ENCODE measurements at regions of chr15 and their contacts with region 1.

Region 1: DNA sequence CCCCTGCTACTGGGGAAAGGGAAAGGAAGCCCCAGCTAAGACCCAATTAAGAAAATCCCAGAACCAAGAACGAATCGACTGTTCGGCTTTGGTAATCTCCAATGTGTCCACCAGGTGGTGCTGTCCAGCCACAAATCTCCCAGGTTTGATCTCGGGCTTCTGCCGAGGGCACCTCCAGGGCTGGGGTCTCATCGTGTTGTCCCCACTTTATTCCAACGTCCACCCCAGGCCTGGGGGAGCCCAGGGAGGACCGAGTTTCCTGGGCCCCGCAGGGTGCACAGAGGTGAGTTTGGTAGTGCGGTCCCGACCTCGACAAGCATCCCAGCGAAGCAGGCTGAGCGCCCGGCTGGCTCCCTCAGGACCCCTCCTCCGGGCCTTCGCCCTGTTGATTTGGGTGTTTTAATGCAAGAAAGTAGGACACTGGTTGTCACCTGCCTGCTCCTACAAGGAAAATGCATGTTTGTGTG is 185.1 kb downstream of the GOLGA6L6 start:
- DNase-seq: peak; percentile 92 to 94
- ATAC-seq: peak; percentile 35 to 68 (median 54)
- H3K4me3 ChIP-seq: no peak overlapping the region
- H3K4me3 Mint-ChIP-seq: peak overlapping the region; percentile 40
- H3K27ac ChIP-seq: no peak overlapping the region
- H3K27ac Mint-ChIP-seq: peak overlapping the region in 1 of 2 donors; percentile 81
- H3K4me1 ChIP-seq: peaks cover 39% of the 10 kb centered on the region
- H3K4me1 Mint-ChIP-seq: peaks cover 15 to 18% of the 10 kb centered on the region in 2 donors
- H3K27me3 ChIP-seq: no peaks in the 10 kb centered on the region
- H3K27me3 Mint-ChIP-seq: peaks cover 0 to 3% of the 10 kb centered on the region in 2 donors
- CTCF ChIP-seq: peak; percentile 100

Region 2: GRCh38 chr15:20367093-20367492 is 10.6 kb after region 1 on chr15:
- intact Hi-C with region 1: loop called (anchors 1 kb)
- DNase-seq: no peak
- ATAC-seq: no peak
- H3K4me3 ChIP-seq: no peak overlapping the region
- H3K4me3 Mint-ChIP-seq: no peak overlapping the region
- H3K27ac ChIP-seq: no peak overlapping the region
- H3K27ac Mint-ChIP-seq: no peak overlapping the region
- H3K4me1 ChIP-seq: no peaks in the 10 kb centered on the region
- H3K4me1 Mint-ChIP-seq: no peaks in the 10 kb centered on the region
- H3K27me3 ChIP-seq: no peaks in the 10 kb centered on the region
- H3K27me3 Mint-ChIP-seq: no peaks in the 10 kb centered on the region
- CTCF ChIP-seq: no peak

Region 3: DNA sequence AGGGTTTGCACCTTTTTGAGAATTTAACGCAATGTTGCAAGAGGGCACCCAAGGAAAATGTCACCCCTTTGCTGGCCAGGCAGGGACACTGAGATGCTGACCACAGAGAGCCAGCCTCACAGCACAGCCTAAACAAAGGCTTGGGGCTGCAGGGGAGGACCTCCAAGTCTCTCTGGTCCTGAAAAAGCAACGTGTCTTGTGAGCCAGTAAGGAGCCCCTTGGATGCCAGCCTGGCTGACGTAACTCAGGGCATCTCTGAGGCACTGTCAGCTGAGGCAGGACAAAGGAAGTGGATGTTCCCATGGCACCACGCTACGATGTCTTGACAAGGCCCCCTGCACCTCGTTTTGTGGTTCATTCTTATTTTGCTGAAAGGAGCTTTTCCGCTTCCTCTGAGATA is 1884.5 kb after region 1 on chr15:
- intact Hi-C with region 1: loop called (anchors 5 kb)
- DNase-seq: no peak
- ATAC-seq: no peak
- H3K4me3 ChIP-seq: no peak overlapping the region
- H3K4me3 Mint-ChIP-seq: no peak overlapping the region
- H3K27ac ChIP-seq: no peak overlapping the region
- H3K27ac Mint-ChIP-seq: peak overlapping the region in 1 of 2 donors; percentile 39
- H3K4me1 ChIP-seq: peaks cover 16% of the 10 kb centered on the region
- H3K4me1 Mint-ChIP-seq: peaks cover 4 to 35% of the 10 kb centered on the region in 2 donors
- H3K27me3 ChIP-seq: no peaks in the 10 kb centered on the region
- H3K27me3 Mint-ChIP-seq: no peaks in the 10 kb centered on the region
- CTCF ChIP-seq: no peak

Region 4: GRCh38 chr15:22262613-22263020 is 1906.1 kb after region 1 on chr15:
- intact Hi-C with region 1: loop called (anchors 1 kb)
- DNase-seq: peak; percentile 69 to 89
- ATAC-seq: peak; percentile 66 to 75 (median 73)
- H3K4me3 ChIP-seq: peak overlapping the region; percentile 4
- H3K4me3 Mint-ChIP-seq: no peak overlapping the region
- H3K27ac ChIP-seq: peak overlapping the region; percentile 84
- H3K27ac Mint-ChIP-seq: no peak overlapping the region
- H3K4me1 ChIP-seq: peaks cover 63% of the 10 kb centered on the region
- H3K4me1 Mint-ChIP-seq: peaks cover 23 to 30% of the 10 kb centered on the region in 2 donors
- H3K27me3 ChIP-seq: no peaks in the 10 kb centered on the region
- H3K27me3 Mint-ChIP-seq: no peaks in the 10 kb centered on the region
- CTCF ChIP-seq: no peak